ENCODE measurements at regions of chr15 and their contacts with region 1.

Region 1: DNA sequence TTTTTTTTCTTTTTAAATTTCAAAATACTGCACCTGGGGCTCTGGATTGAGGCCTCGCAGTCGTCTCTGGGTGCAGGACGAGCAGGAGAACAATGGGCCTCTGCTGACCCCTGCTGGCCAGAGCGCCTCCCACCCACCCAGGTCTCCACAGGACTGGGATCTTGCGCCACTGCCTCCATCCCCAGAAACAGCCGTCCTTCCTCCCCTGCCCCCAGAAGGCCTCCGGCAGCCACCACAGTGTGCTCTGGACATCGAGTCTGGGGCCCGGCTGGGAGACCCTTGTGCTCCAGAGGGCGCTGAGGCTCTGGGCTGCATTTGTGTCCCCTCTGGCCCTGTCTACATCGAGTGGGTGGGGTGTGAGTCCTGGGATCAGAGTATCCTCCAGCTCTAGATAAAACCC is 6.6 kb upstream of the ACSBG1 start:
- DNase-seq: peak; percentile 70
- H3K4me3 Mint-ChIP-seq: no peak overlapping the region
- H3K27ac Mint-ChIP-seq: no peak overlapping the region
- H3K4me1 Mint-ChIP-seq: no peaks in the 10 kb centered on the region
- H3K27me3 Mint-ChIP-seq: peaks cover 16% of the 10 kb centered on the region

Region 2: DNA sequence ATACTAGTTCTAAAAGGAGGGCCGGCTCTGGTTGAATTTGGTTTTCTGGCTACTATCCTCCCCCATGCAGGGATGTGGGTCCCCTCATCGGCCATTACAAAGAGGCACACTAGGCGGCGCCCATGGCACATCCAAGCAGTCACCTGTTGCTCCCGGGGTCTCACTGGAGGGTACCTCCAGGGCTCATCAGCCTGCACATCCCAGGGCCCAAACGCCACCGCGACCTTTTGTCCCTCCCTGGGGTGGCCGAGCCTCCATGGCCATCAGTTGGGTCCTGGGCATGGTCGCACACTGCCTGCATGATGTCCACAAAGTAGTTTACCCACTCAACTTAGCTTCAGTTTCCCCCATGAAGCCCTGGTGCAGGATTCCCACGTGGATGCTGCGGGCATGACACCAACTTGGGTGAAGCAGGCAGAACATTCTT is 63.5 kb before region 1 on chr15:
- intact Hi-C with region 1: loop called (anchors 2 kb)
- DNase-seq: no peak
- H3K4me3 Mint-ChIP-seq: no peak overlapping the region
- H3K27ac Mint-ChIP-seq: no peak overlapping the region
- H3K4me1 Mint-ChIP-seq: peaks cover 24% of the 10 kb centered on the region
- H3K27me3 Mint-ChIP-seq: no peaks in the 10 kb centered on the region

Region 3: GRCh38 chr15:78195735-78196201 is 45.2 kb before region 1 on chr15:
- intact Hi-C with region 1: loop called (anchors 1 kb)
- DNase-seq: peak; percentile 26
- H3K4me3 Mint-ChIP-seq: no peak overlapping the region
- H3K27ac Mint-ChIP-seq: no peak overlapping the region
- H3K4me1 Mint-ChIP-seq: no peaks in the 10 kb centered on the region
- H3K27me3 Mint-ChIP-seq: peaks cover 14% of the 10 kb centered on the region